HEK293 (cell line): ENCODE measurements at regions of chr11 and their contacts with region 1.

Region 1: GRCh38 chr11:61899146-61899841 is 7.9 kb upstream of the FADS3 start:
- H3K4me3 ChIP-seq: no peak overlapping the region
- H3K27ac ChIP-seq: no peak overlapping the region
- H3K4me1 ChIP-seq: no peaks in the 10 kb centered on the region
- CTCF ChIP-seq: peak; percentile 96

Region 2: GRCh38 chr11:61792310-61793085 is 106.8 kb before region 1 on chr11 and contains the starts of genes FEN1 and TMEM258:
- CTCF ChIA-PET with region 1: interaction called, 57 read pairs
- POLR2A ChIA-PET with region 1: interaction called, 3 read pairs
- H3K4me3 ChIP-seq: peak within 1 kb of the TSS; percentile 87
- H3K27ac ChIP-seq: peak within 1 kb of the TSS; percentile 89
- H3K4me1 ChIP-seq: 0 out of 2 replicates have a peak, but pooled peaks cover 1% of the 10 kb centered on the region
- CTCF ChIP-seq: no peak

Region 3: DNA sequence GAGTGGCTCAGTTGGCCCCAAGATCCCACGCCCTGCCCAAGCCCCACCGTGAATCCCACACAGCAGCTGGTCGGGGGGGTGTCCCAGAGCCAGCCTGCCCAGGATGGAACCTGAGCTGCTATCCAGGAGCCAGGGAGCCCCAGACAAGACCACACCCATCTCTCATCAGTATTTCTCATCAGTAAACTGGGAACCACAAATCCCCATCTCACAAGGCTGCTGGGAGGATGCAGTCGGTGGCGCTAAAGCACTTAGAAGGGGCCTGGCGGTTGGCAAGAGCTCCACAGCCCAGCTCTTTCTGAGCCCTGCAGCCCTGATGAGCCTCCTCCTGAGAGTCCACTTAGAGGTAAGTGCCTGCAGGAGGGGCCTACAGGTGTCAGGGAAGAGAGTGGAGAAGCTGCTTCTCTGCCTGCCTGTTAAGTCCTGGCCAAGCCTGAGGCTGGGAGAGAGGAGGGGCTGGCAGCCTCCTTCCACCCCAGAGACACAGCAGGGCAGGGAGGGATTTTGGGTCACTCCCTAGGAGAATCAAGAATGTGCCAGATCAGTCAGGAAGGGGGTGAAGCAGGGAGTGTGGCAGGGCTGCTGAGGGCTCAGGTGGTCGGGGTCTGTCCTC is 14.0 kb before region 1 on chr11:
- CTCF ChIA-PET with region 1: interaction called, 24 read pairs
- POLR2A ChIA-PET with region 1: no interaction called
- H3K4me3 ChIP-seq: no peak overlapping the region
- H3K27ac ChIP-seq: no peak overlapping the region
- H3K4me1 ChIP-seq: no peaks in the 10 kb centered on the region; the same call in 1 of the 2 replicates
- CTCF ChIP-seq: no peak

Region 4: GRCh38 chr11:61940466-61940865 is 41.2 kb after region 1 on chr11:
- CTCF ChIA-PET with region 1: interaction called, 329 read pairs
- POLR2A ChIA-PET with region 1: no interaction called
- H3K4me3 ChIP-seq: no peak overlapping the region
- H3K27ac ChIP-seq: no peak overlapping the region
- H3K4me1 ChIP-seq: no peaks in the 10 kb centered on the region
- CTCF ChIP-seq: no peak

Region 5: GRCh38 chr11:62054484-62055121 is 155.3 kb after region 1 on chr11:
- CTCF ChIA-PET with region 1: interaction called, 102 read pairs
- POLR2A ChIA-PET with region 1: no interaction called
- H3K4me3 ChIP-seq: no peak overlapping the region
- H3K27ac ChIP-seq: no peak overlapping the region
- H3K4me1 ChIP-seq: no peaks in the 10 kb centered on the region
- CTCF ChIP-seq: peak; percentile 64

Region 6: DNA sequence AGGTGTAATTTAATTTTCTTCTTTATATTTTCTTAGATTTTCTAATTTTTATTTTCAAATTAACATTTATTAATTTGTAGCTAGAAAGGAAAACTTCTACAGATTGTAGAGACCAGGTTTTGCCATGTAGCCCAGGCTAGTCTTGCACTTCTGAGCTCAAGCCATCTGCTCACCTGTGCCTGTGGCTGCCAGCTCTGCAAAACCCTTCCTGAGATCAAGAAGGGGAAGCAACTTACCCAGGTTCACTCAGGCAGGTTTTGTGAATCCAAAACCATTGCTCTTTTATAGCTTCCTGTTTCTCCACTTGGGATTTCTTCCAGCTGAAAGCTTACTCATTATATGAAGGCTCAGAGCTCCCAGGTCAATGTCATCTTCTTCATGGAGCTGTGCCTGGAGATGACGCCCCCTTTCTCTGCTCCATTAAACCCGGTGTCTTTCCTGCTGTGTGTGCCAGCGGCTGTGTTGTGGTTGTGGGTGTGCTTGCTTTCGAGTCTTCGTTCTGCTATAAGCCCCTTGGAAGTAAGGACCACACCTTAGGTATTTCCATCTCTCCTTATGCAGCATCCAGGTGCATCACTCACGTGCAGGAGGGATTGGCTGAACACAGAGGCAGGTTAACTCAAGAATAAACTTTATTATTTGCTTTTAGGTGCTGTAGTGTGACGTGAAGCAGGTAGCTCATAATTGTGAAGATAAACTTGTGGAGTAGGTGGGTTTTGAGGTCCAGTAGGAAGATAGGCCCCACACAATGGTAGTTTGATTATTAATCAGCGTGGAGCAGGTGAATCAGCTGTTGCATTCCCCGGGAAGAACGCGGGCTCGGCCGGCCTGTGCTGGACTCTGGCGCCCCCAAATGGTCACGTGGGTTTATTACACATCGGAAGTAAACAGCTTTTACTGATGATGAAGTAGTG is 182.3 kb after region 1 on chr11:
- CTCF ChIA-PET with region 1: interaction called, 258 read pairs
- POLR2A ChIA-PET with region 1: interaction called, 3 read pairs
- H3K4me3 ChIP-seq: no peak overlapping the region
- H3K27ac ChIP-seq: no peak overlapping the region
- H3K4me1 ChIP-seq: no peaks in the 10 kb centered on the region
- CTCF ChIP-seq: peak; percentile 76